Activated naive CD4-positive, alpha-beta T cell treated with anti-CD3 and anti-CD28 coated beads for 36 hours (primary cell): ENCODE measurements at regions of chr1 and their contacts with region 1.

Region 1: DNA sequence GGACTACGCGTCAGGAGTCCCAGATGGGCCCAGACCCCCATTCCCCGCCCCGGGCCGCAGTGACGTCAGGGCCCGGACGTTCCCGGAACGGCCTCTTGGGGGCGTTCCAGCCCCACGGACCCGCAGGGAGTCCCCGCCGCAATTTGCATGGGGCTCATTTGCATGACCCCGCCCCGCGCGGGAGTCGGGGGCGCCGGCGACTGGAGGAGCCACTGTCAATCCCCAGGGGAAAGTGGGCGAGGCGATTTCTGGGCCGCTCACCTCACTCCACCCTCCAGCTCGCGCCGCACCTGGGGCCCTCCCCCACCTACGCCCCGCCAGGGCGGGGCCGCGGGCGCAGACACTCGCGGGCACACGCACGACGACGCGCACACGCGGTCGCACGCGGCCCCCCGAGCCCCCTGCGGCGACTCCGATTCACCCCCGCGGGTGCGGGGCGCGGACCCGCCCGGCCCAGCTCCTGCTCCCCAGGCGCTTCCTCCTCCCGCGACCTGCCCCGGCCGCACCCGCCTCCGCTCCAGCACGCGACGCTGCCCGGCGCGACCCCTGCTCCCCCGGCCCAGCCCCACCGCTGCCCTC is 13.2 kb downstream of the AGRN start:
- DNase-seq: peak; percentile 97
- H3K4me3 Mint-ChIP-seq: peak overlapping the region; percentile 45
- H3K27ac Mint-ChIP-seq: no peak overlapping the region
- H3K4me1 Mint-ChIP-seq: peaks cover 9% of the 10 kb centered on the region
- H3K27me3 Mint-ChIP-seq: peaks cover 9% of the 10 kb centered on the region

Region 2: GRCh38 chr1:983799-984473 is 49.2 kb before region 1 on chr1:
- CTCF ChIA-PET with region 1: interaction called, 10 read pairs
- intact Hi-C with region 1: no loop called
- DNase-seq: peak; percentile 73
- H3K4me3 Mint-ChIP-seq: no peak overlapping the region
- H3K27ac Mint-ChIP-seq: no peak overlapping the region
- H3K4me1 Mint-ChIP-seq: no peaks in the 10 kb centered on the region
- H3K27me3 Mint-ChIP-seq: peaks cover 17% of the 10 kb centered on the region

Region 3: DNA sequence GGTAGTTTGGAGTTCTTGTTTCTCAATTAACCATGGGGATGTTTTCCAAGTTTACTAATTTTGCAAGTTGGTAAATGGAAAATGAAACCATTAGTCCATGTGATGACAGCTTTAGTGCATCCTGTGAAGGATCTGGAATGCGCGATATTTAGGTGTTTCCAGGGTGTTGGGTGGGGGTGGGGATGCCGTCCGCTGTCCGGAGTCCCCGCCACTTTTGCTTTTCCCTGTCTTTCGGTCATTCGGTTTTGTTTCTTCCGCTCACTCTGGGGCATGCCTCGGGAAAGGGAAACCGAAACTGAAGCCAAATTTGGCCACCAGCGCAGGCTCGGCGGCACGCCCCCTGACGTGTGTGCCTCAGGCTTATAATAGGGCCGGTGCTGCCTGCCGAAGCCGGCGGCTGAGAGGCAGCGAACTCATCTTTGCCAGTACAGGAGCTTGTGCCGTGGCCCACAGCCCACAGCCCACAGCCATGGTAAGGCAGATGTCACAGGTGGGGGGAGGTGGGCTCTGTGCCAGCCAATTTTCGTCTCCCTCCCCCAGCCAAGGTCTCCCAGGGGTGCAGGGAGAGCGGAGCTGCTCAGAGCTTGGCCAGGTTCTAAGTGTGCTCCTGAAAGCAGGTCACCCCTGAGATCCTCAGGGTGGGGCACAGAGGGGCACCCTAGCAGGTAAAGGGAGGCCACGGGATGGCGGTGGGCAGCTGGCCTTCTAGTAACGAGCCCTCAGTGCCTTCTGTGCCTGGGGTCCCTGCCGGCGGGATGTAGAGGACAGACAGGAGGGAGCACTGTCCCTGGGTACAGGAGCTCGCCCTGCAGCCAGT is 19.8 kb before region 1 on chr1 and contains the start of gene ISG15:
- CTCF ChIA-PET with region 1: no interaction called
- intact Hi-C with region 1: loop called (anchors 2 kb)
- DNase-seq: peak; percentile 92
- H3K4me3 Mint-ChIP-seq: peak within 1 kb of the TSS; percentile 94
- H3K27ac Mint-ChIP-seq: peak within 1 kb of the TSS; percentile 86
- H3K4me1 Mint-ChIP-seq: peaks cover 29% of the 10 kb centered on the region
- H3K27me3 Mint-ChIP-seq: peaks cover 4% of the 10 kb centered on the region
- total RNA-seq, gene ISG15: 143 to 147 TPM

Region 4: GRCh38 chr1:1109743-1110142 is 76.6 kb after region 1 on chr1:
- CTCF ChIA-PET with region 1: no interaction called
- intact Hi-C with region 1: no loop called
- DNase-seq: no peak
- H3K4me3 Mint-ChIP-seq: no peak overlapping the region
- H3K27ac Mint-ChIP-seq: no peak overlapping the region
- H3K4me1 Mint-ChIP-seq: peaks cover 21% of the 10 kb centered on the region
- H3K27me3 Mint-ChIP-seq: no peaks in the 10 kb centered on the region

Region 5: GRCh38 chr1:1231400-1232223 is 198.5 kb after region 1 on chr1 and contains the start of gene SDF4:
- CTCF ChIA-PET with region 1: no interaction called
- intact Hi-C with region 1: loop called (anchors 10 kb)
- DNase-seq: peak; percentile 97
- H3K4me3 Mint-ChIP-seq: peak within 1 kb of the TSS; percentile 86
- H3K27ac Mint-ChIP-seq: peak within 1 kb of the TSS; percentile 86
- H3K4me1 Mint-ChIP-seq: peaks cover 35% of the 10 kb centered on the region
- H3K27me3 Mint-ChIP-seq: no peaks in the 10 kb centered on the region
- total RNA-seq, gene SDF4: 74.7 to 79.5 TPM

Region 6: GRCh38 chr1:1250786-1251284 is 217.7 kb after region 1 on chr1:
- CTCF ChIA-PET with region 1: no interaction called
- intact Hi-C with region 1: loop called (anchors 2 kb)
- DNase-seq: peak; percentile 91
- H3K4me3 Mint-ChIP-seq: peak overlapping the region; percentile 10
- H3K27ac Mint-ChIP-seq: peak overlapping the region; percentile 85
- H3K4me1 Mint-ChIP-seq: peaks cover 22% of the 10 kb centered on the region
- H3K27me3 Mint-ChIP-seq: peaks cover 2% of the 10 kb centered on the region